Uterus (tissue), 4 donors: ENCODE measurements at regions of chr19 and their contacts with region 1.

Region 1: DNA sequence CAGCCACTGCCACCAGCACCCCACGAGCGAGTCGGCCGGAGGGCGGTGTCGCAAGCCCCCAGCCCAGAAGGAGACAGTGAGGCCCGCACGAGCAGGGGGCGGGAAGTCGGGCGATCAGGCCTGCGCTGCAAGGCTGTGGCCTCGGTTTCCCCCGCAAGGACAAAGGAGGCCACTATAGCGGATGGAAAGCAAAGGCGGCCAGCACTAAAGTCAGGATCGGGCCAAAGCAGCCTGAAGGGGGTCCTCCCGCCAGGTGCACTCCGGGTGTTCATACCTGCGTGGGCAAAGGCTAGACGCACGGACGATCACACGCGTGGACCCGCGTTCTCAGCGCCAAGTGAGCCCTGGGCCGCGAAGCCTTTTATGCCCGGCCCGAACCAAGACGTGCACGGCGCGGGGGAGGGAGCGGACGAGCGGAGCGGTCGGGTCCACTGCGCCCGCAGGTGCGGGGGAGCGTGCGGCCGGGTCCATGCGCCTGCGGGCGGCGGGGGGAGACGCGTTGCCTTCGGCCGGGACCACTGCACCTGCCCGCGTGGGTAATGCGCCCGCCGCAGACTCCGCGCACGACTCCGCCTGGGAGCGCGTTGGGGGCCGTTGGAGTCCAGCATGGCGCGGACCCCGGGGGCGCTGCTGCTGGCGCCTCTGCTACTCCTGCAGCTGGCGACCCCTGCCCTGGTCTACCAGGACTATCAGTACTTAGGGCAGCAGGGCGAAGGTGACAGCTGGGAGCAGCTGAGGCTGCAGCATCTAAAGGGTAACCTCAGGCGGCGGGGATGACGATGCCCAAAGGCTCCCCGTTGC is at the starts of genes PRDX2 and THSD8:
- DNase-seq: peak; percentile 72 to 80
- H3K4me3 ChIP-seq: peak within 1 kb of the TSS; percentile 55 to 84
- H3K27ac ChIP-seq: peak within 1 kb of the TSS; percentile 56 to 86
- H3K4me1 ChIP-seq: peaks cover 0 to 9% of the 10 kb centered on the region in 2 donors
- H3K27me3 ChIP-seq: no peaks in the 10 kb centered on the region
- CTCF ChIP-seq: peak in 2 of 4 experiments; percentile 18 to 19
- POLR2A ChIP-seq: peak; percentile 72 to 77
- total RNA-seq, gene PRDX2: 148 to 178 (median 163) TPM
- total RNA-seq, gene THSD8: 4.1 TPM in 1 of 4 donors, not detected in the others

Region 2: DNA sequence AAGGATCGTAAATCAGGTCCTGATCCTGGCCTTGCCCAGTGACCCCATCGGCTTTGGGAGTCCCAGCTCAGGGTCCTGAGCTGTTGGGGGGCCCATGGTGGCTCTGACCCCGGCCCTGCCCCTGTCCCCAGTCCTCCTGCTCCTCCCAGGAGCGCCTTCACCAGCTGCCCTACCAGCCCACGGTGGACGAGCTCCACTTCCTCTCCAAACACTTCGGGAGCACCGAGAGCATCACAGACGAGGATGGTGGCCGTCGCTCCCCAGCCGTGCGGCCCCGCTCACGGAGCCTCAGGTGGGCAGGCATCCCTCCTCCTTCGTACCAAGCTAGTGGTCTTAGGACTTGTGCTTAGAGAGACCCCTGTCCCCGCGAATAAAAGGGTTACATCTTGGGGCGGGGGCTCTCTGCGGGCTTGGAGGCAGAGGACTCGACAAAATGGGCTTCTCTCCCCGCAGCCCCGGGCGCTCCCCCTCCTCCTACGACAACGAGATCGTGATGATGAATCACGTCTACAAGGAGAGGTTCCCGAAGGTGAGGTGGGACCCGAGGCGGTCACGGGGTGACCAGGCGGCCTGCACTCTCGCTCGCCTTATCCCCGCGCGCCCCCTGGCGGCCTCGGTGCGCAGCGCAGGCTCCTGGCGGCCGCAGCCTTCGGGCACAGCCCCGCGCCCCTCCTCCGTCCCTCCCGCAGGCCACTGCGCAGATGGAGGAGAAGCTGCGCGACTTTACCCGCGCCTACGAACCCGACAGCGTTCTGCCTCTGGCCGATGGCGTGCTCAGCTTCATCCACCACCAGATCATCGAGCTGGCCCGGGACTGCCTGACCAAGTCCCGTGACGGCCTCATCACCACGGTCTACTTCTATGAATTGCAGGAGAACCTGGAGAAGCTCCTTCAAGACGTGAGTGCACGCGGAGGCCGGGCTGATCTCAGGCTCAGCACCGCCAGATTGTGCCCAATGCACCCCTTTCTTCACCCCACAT is 45.8 kb after region 1 on chr19:
- intact Hi-C with region 1: loop called (anchors 2 kb)
- DNase-seq: peak; percentile 81 to 87
- H3K4me3 ChIP-seq: no peak overlapping the region
- H3K27ac ChIP-seq: no peak overlapping the region
- H3K4me1 ChIP-seq: no peaks in the 10 kb centered on the region
- H3K27me3 ChIP-seq: peaks cover 0 to 15% of the 10 kb centered on the region in 2 donors
- CTCF ChIP-seq: peak; percentile 91 to 99 (median 99)
- POLR2A ChIP-seq: peak in 1 of 2 donors; percentile 15